H1 (cell line): ENCODE measurements at regions of chr12 and their contacts with region 1.

Region 1: DNA sequence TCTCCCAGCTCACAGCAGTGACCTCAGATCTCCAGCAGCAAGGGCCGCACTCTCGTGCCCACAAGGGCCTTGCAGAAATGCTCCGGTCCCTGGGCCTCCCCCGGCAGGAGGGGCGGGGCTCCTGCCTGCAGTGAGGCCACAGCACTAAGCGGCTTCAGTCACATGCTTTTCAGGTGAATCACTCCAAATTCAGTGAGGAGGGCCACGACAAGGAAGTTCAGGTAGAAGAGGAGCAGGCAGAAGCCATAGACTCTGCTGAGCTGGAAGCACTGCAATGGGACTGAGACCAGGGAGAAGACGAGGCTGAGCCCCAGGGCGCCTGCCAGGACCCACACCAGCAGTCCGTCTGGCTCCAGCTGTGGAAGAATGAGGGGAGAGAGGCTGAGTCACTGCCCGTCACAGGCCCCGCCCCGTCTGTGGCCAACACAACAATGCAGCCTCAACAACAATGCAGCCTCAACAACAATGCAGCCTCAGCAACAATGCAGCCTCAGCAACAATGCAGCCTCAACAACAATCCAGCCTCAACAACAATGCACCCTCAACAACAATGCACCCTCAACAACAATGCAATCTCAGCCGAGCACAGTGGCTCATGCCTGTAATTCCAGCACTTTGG is 35.2 kb downstream of the SLC8B1 start:
- DNase-seq: peak in 1 of 2 experiments; percentile 49
- H3K4me3 ChIP-seq: no peak overlapping the region
- H3K27ac ChIP-seq: 0 out of 2 replicates have a peak overlapping the region, but pooled peaks have one; percentile 50
- H3K4me1 ChIP-seq: peaks cover 0 to 9% (median 8%) of the 10 kb centered on the region in 4 experiments; a peak in 5 of 7 replicates
- H3K27me3 ChIP-seq: no peaks in the 10 kb centered on the region
- CTCF ChIP-seq: no peak
- EP300 ChIP-seq: no peak
- POLR2A ChIP-seq: no peak
- RAD21 ChIP-seq: no peak

Region 2: DNA sequence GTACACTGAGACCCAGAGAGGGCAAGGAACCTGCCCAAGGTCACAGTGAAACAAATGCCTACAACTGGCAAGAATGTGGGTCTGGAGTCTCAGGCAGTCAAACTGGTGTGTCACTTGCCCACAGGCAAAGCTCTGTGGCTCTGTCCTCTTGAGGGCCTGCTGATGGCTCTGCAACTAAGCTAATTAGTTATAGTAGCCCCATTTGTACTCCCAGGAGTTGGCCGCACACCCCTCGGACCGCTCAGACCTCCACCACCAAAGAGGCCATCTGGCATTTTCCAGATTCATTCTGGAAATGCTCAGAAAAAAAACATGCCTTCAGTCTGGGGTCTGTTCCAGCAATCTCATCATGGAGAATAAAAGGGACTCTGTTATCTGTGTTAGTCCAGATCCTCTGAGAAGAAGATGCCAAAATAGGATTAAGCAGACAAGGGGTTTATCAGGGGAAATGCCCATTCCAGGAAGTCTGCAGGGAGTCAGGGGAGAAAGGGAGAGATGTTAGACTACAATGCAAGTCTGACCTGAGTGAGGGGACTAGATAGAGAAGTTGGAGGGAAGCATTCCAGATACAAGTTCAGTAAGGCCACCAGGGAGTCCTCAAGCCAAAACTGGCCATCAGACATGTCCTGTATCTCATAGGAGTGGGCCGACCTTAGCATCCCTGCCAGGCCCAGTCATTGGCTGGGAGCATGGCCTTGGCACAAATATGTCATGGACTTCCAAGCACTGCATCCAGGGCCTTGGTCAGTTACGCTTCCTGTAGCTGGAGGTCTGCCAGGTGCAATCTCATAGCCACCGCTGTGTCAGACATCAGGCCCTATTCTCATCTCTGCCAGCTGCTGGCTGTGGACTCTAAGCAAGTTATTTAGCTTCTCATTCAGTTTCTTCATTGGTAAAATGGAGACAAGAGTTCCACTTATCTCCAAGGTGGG is 408.4 kb before region 1 on chr12:
- CTCF ChIA-PET with region 1: no interaction called
- POLR2A ChIA-PET with region 1: no interaction called
- DNase-seq: no peak
- H3K4me3 ChIP-seq: no peak overlapping the region
- H3K27ac ChIP-seq: no peak overlapping the region
- H3K4me1 ChIP-seq: peaks cover 0 to 2% (median 0%) of the 10 kb centered on the region in 4 experiments; a peak in 1 of 7 replicates
- H3K27me3 ChIP-seq: no peaks in the 10 kb centered on the region
- CTCF ChIP-seq: no peak
- EP300 ChIP-seq: no peak
- POLR2A ChIP-seq: no peak
- RAD21 ChIP-seq: no peak

Region 3: GRCh38 chr12:113287899-113288282 is 11.8 kb before region 1 on chr12:
- CTCF ChIA-PET with region 1: interaction called, 8 read pairs
- POLR2A ChIA-PET with region 1: interaction called, 20 read pairs
- DNase-seq: no peak
- H3K4me3 ChIP-seq: no peak overlapping the region
- H3K27ac ChIP-seq: no peak overlapping the region
- H3K4me1 ChIP-seq: no peaks in the 10 kb centered on the region
- H3K27me3 ChIP-seq: no peaks in the 10 kb centered on the region
- CTCF ChIP-seq: no peak
- EP300 ChIP-seq: no peak
- POLR2A ChIP-seq: no peak
- RAD21 ChIP-seq: no peak

Region 4: DNA sequence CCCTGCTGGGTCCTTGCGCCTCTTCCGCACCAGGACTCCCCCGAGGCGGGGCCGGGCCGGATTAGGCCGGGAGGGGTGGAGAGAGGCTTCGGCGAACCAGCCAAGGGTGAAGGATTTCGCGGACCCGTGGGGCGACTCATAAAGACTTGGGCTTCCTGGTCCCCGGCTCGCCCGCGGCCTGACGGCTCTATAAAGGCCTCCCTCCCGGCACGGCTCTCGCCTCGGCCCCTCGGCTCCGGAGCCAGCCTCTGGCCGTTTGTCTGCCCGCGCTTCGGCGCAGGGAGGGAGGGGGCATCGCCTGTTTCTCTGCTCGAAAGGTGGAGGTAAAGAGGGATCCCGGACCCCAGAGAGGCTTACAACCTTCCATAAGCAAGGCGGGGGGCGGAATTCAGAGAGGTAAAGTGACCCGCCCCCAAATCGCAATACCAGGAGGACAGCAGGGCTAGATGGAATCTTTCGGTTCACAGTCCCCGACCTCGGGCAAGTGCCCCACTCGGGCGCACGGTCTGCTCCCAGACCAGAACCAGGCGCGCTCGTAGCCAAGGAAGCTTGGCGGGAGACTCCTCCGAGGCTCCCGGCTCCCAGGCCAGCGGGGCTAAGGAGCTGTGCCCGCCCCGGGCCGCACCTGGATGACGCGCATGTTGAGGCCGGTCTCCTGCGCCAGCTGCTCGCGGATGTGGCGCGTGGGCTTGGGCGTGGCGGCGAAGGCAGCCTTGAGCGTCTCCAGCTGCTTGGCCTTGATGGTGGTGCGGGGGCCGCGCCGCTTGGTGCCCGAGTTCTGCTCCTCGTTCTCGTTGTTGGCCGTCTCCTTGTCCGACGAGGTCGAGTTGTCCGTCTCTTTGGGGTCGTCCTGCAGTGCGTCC is 168.0 kb after region 1 on chr12:
- CTCF ChIA-PET with region 1: no interaction called
- POLR2A ChIA-PET with region 1: no interaction called
- DNase-seq: peak in 1 of 2 experiments; percentile 82
- H3K4me3 ChIP-seq: peak overlapping the region; percentile 53 to 66 (median 60)
- H3K27ac ChIP-seq: no peak overlapping the region
- H3K4me1 ChIP-seq: peaks cover 4 to 81% (median 55%) of the 10 kb centered on the region in 4 experiments
- H3K27me3 ChIP-seq: peaks cover 94 to 100% (median 99%) of the 10 kb centered on the region in 4 experiments
- CTCF ChIP-seq: no peak
- EP300 ChIP-seq: no peak
- POLR2A ChIP-seq: no peak
- RAD21 ChIP-seq: no peak